Natural killer cell (primary cell): ENCODE measurements at regions of chr13 and their contacts with region 1.

Region 1: DNA sequence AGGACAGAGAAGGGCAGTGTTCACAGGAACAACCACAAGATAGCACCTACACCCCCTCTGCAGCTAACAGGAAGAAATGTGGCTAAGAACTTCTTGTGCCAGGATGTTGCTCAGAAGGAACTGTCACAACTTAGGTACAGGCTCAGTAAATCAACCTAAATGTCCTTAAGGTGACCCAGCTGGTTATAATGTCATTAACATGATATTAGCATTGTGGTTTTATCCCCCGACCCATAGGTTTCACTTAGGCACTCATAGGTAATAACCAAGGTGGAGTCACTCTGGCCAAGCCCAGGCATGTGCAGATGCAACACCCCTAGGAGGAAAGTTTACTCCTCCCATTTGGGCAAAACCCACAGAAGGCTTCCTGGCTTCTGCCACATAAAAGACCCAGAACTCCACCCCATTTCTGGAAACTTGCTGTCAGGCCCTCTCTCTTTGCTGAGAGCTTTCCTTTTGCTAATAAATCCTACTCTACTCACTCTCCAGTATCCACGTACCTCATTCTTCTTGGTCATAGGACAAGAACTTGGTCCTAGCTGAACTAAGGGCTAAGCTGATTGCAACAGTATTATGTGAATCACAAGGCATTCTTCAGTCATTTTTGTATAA is 951.3 kb downstream of the SLITRK5 start:
- DNase-seq: peak; percentile 34 to 37
- ATAC-seq: peak; percentile 68 to 89 (median 79)
- H3K4me3 ChIP-seq: peak overlapping the region; percentile 6
- H3K4me3 Mint-ChIP-seq: peak overlapping the region; percentile 76
- H3K27ac ChIP-seq: peak overlapping the region; percentile 86
- H3K27ac Mint-ChIP-seq: peak overlapping the region; percentile 87 to 89
- H3K4me1 ChIP-seq: peaks cover 17% of the 10 kb centered on the region
- H3K4me1 Mint-ChIP-seq: peaks cover 42 to 49% of the 10 kb centered on the region in 2 donors
- H3K27me3 ChIP-seq: no peaks in the 10 kb centered on the region
- H3K27me3 Mint-ChIP-seq: no peaks in the 10 kb centered on the region
- CTCF ChIP-seq: no peak

Region 2: DNA sequence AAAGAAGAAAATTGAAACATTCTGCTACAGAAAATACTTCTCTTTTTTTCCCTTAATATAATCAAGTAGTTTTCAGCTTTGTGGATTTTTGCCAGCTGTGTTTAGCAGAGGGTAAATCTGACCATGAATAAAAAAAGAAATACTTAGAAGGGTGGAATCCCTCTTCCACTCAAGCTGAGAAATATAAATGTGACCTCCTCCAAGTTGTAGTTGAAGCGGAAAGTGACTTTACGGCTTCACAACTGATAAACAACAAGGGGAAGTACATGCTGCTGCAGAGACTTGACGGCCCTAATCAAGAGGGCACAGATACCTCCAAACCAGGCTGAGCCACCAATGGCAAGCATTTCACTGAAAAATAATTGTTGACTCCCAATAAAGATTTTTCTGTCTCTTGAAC is 166.3 kb before region 1 on chr13:
- intact Hi-C with region 1: loop called (anchors 10 kb)
- DNase-seq: no peak
- ATAC-seq: peak in 2 of 3 donors; percentile 55 to 57
- H3K4me3 ChIP-seq: no peak overlapping the region
- H3K4me3 Mint-ChIP-seq: no peak overlapping the region
- H3K27ac ChIP-seq: no peak overlapping the region
- H3K27ac Mint-ChIP-seq: no peak overlapping the region
- H3K4me1 ChIP-seq: no peaks in the 10 kb centered on the region
- H3K4me1 Mint-ChIP-seq: no peaks in the 10 kb centered on the region
- H3K27me3 ChIP-seq: no peaks in the 10 kb centered on the region
- H3K27me3 Mint-ChIP-seq: no peaks in the 10 kb centered on the region
- CTCF ChIP-seq: no peak

Region 3: GRCh38 chr13:88637935-88638334 is 15.5 kb after region 1 on chr13:
- intact Hi-C with region 1: no loop called
- DNase-seq: no peak
- ATAC-seq: no peak
- H3K4me3 ChIP-seq: no peak overlapping the region
- H3K4me3 Mint-ChIP-seq: no peak overlapping the region
- H3K27ac ChIP-seq: no peak overlapping the region
- H3K27ac Mint-ChIP-seq: no peak overlapping the region
- H3K4me1 ChIP-seq: no peaks in the 10 kb centered on the region
- H3K4me1 Mint-ChIP-seq: peaks cover 0 to 4% of the 10 kb centered on the region in 2 donors
- H3K27me3 ChIP-seq: no peaks in the 10 kb centered on the region
- H3K27me3 Mint-ChIP-seq: no peaks in the 10 kb centered on the region
- CTCF ChIP-seq: no peak

Region 4: DNA sequence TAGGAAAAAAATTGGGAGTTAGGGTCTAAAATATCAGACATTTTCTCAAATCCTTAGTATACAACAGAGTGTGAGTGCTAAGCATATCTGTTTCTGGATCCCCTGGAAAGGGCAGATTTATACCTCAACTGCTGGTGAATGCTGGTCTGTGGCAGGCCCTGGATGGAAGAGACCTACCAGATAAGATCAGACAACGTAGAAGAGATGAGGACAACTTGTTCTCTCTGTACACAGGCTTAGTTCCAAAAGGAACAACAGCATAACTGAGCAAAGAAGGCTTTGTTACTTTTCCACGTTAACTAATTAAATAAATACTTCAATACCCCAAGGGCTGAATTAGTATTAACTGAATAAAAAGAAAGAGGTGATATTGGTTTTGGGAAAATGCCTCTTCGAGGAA is 326.0 kb after region 1 on chr13:
- intact Hi-C with region 1: no loop called
- DNase-seq: no peak
- ATAC-seq: no peak
- H3K4me3 ChIP-seq: no peak overlapping the region
- H3K4me3 Mint-ChIP-seq: no peak overlapping the region
- H3K27ac ChIP-seq: no peak overlapping the region
- H3K27ac Mint-ChIP-seq: no peak overlapping the region
- H3K4me1 ChIP-seq: no peaks in the 10 kb centered on the region
- H3K4me1 Mint-ChIP-seq: no peaks in the 10 kb centered on the region
- H3K27me3 ChIP-seq: no peaks in the 10 kb centered on the region
- H3K27me3 Mint-ChIP-seq: no peaks in the 10 kb centered on the region
- CTCF ChIP-seq: no peak